GM12878 (cell line): ENCODE measurements at regions of chr2 and their contacts with region 1.

Region 1: GRCh38 chr2:61470965-61471904 is at the start of gene USP34:
- DNase-seq: peak; percentile 87
- ATAC-seq: peak; percentile 93
- H3K4me3 ChIP-seq: peak within 1 kb of the TSS; percentile 98
- H3K27ac ChIP-seq: peak within 1 kb of the TSS; percentile 97
- H3K4me1 ChIP-seq: no peaks in the 10 kb centered on the region; the same call in 1 of the 2 replicates
- H3K27me3 ChIP-seq: no peaks in the 10 kb centered on the region
- CTCF ChIP-seq: no peak
- EP300 ChIP-seq: no peak
- POLR2A ChIP-seq: peak; percentile 96
- RAD21 ChIP-seq: no peak
- polyA plus RNA-seq, gene USP34: 26.2 to 30.6 TPM

Region 2: DNA sequence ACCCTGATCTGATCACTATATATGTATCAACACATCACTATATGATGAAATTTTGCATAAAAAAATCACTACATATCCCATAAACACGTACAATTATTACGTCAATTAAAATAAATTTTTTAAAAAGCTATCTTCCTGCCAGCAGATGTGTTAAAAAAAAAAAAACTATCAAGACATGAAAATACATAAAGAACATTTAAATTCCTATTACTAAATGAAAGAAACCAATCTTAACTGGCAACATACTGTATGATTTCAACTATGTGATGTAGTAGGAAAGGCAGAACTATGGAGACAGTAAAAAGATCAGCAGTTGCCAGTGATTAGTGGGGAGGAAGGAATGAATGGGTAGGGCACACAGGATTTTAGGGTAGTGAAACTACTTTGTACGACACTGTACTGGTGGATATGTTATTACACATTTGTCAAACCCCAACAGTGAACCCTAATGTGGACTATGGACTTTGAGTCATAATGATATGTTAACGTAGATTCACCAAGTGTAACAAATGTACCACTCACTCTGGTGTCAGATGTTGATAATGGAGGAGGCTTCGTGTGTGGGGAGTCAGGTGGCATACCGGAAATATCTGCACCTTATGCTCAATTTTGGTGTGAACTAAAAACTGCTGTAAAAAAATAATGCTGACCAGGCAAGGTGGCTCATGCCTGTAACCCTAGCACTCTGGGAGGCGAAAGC is 27.7 kb before region 1 on chr2:
- CTCF ChIA-PET with region 1: interaction called, 3 read pairs
- POLR2A ChIA-PET with region 1: interaction called, 13 read pairs
- RAD21 ChIA-PET with region 1: interaction called, 3 read pairs
- SMC1A ChIA-PET with region 1: interaction called, 32 read pairs
- in situ Hi-C with region 1: no loop called
- intact Hi-C with region 1: no loop called
- DNase-seq: peak; percentile 97
- ATAC-seq: peak; percentile 93
- H3K4me3 ChIP-seq: no peak overlapping the region
- H3K27ac ChIP-seq: peak overlapping the region; percentile 76
- H3K4me1 ChIP-seq: peaks cover 46% of the 10 kb centered on the region
- H3K27me3 ChIP-seq: no peaks in the 10 kb centered on the region
- CTCF ChIP-seq: no peak
- EP300 ChIP-seq: peak; percentile 90 to 98; a peak in 3 of 4 replicates
- POLR2A ChIP-seq: no peak
- RAD21 ChIP-seq: no peak

Region 3: DNA sequence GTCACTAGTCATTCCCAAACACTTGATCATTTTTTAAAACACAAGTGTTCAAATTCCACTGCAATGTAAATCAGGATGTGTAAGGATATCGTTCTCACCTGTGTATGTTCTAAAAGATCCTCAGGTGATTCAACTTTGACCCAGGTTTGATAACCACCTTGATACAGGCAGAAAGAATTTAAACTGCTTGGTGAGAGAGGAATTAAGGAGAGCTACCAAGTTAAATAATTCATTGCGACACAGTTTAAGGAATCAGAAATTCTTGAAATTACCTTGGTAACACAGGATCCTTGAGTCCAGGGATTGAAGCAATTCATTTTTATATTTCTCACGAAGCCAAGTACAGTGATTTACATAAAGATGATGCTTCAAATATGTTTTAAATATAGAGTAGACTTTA is 1153.6 kb after region 1 on chr2:
- CTCF ChIA-PET with region 1: no interaction called
- POLR2A ChIA-PET with region 1: no interaction called
- RAD21 ChIA-PET with region 1: no interaction called
- SMC1A ChIA-PET with region 1: no interaction called
- in situ Hi-C with region 1: no loop called
- intact Hi-C with region 1: no loop called
- DNase-seq: no peak
- ATAC-seq: no peak
- H3K4me3 ChIP-seq: no peak overlapping the region
- H3K27ac ChIP-seq: no peak overlapping the region
- H3K4me1 ChIP-seq: no peaks in the 10 kb centered on the region
- H3K27me3 ChIP-seq: no peaks in the 10 kb centered on the region
- CTCF ChIP-seq: no peak
- EP300 ChIP-seq: no peak
- POLR2A ChIP-seq: no peak
- RAD21 ChIP-seq: no peak